ENCODE measurements at regions of chr1 and their contacts with region 1.

Region 1: GRCh38 chr1:153510984-153511410 is 24.8 kb downstream of the S100A6 start:
- DNase-seq: peak; percentile 87
- H3K4me3 Mint-ChIP-seq: no peak overlapping the region
- H3K27ac Mint-ChIP-seq: peak overlapping the region; percentile 73
- H3K4me1 Mint-ChIP-seq: peaks cover 60% of the 10 kb centered on the region
- H3K27me3 Mint-ChIP-seq: no peaks in the 10 kb centered on the region
- CTCF ChIP-seq: peak; percentile 100

Region 2: DNA sequence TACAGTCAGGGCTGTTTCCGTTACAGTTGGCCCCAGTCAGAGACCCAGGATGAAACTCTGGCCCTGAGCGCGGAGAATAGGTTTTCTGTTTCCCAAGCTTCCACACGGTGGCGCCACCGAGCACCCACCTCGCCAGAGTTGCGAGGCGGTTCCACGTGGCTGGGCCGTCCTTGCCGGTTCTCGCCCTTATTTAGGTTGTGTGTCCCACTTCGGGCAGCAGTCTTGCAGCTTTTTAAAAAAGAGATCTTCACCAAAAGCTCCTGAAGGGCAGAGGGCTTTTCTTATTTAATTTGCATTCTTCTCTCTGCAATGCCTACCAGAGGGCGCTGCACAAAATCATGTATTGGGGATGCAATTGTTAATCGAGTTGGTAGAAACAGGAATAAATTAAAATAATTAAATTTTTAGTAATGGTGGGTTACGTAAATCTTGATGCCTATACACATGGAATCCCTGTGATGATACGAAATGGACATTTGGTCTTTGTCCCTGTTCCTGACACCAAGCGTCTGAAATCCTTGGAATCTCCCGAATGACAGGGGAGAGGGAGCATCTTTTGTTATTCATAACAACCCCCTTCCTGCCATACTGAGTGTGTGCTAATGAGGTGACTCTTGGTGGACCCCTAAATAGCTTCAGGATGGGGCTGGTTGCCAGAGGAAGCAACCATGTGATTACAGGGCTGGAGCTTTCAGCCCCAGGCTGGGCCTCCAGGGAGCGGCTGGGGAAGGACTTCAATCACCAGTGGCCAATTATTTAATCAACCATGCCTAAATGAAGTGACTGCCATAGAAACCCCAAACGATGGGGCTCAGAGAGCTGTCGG is 45.0 kb before region 1 on chr1:
- CTCF ChIA-PET with region 1: no interaction called
- POLR2A ChIA-PET with region 1: no interaction called
- intact Hi-C with region 1: no loop called
- DNase-seq: peak; percentile 72
- H3K4me3 Mint-ChIP-seq: no peak overlapping the region
- H3K27ac Mint-ChIP-seq: no peak overlapping the region
- H3K4me1 Mint-ChIP-seq: no peaks in the 10 kb centered on the region
- H3K27me3 Mint-ChIP-seq: peaks cover 32% of the 10 kb centered on the region
- CTCF ChIP-seq: peak; percentile 93

Region 3: GRCh38 chr1:153526132-153526543 is 15.1 kb after region 1 on chr1:
- CTCF ChIA-PET with region 1: interaction called, 154 read pairs
- POLR2A ChIA-PET with region 1: interaction called, 780 read pairs
- intact Hi-C with region 1: no loop called
- DNase-seq: peak; percentile 94
- H3K4me3 Mint-ChIP-seq: peak overlapping the region; percentile 29
- H3K27ac Mint-ChIP-seq: peak overlapping the region; percentile 85
- H3K4me1 Mint-ChIP-seq: peaks cover 38% of the 10 kb centered on the region
- H3K27me3 Mint-ChIP-seq: no peaks in the 10 kb centered on the region
- CTCF ChIP-seq: no peak

Region 4: DNA sequence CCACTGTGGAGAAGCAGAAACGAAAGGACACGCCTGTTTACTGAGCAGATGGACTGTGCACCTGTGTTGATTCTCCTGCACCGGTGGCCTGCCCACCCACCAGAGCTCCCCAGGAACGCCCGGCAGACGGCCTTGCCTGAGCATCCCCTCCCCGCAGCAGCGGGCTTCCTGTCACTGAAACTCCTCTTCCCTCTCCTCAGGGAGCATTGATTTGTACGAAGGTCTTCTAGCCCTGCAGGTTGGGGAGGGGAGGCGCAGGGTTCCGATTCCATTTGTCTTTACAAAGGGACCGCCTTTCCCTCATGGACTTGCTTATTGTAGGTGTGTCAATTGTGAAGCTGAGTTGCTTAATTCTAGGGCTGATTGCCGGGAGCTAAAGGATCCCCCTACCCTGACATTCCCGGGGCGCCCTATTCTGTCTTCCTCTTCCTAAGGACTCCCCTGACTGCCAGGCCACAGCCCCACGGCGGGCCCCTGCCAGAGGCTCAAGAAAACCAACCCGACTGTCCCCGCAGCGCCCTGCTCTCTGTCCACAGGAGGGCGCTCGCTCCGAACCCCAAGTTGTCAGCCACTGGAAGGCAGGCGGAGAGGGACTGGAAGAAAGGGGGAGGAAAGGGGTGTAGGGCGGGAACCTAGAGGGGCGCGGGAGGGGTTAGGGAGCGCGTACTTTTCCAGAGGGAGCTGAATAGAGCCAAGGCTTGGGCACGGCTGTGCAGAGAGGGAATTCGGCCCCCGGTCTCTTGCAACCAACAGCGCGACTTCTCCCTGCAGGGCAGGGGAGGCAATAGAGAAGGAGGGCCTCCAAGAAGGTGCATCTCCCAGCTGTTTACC is 22.0 kb after region 1 on chr1:
- CTCF ChIA-PET with region 1: interaction called, 154 read pairs
- POLR2A ChIA-PET with region 1: interaction called, 780 read pairs
- intact Hi-C with region 1: loop called (anchors 1 kb)
- DNase-seq: peak; percentile 97
- H3K4me3 Mint-ChIP-seq: peak overlapping the region; percentile 99
- H3K27ac Mint-ChIP-seq: peak overlapping the region; percentile 75
- H3K4me1 Mint-ChIP-seq: peaks cover 47% of the 10 kb centered on the region
- H3K27me3 Mint-ChIP-seq: no peaks in the 10 kb centered on the region
- CTCF ChIP-seq: peak; percentile 93

Region 5: GRCh38 chr1:153545067-153546055 is 34.4 kb after region 1 on chr1 and contains the start of gene S100A4:
- CTCF ChIA-PET with region 1: interaction called, 26 read pairs
- POLR2A ChIA-PET with region 1: interaction called, 780 read pairs
- intact Hi-C with region 1: no loop called
- DNase-seq: peak; percentile 99
- H3K4me3 Mint-ChIP-seq: peak within 1 kb of the TSS; percentile 72
- H3K27ac Mint-ChIP-seq: peak within 1 kb of the TSS; percentile 92
- H3K4me1 Mint-ChIP-seq: peaks cover 89% of the 10 kb centered on the region
- H3K27me3 Mint-ChIP-seq: no peaks in the 10 kb centered on the region
- CTCF ChIP-seq: no peak
- total RNA-seq, gene S100A4: 27.2 and 60.7 TPM in 2 replicates

Region 6: GRCh38 chr1:153553830-153554541 is 43.0 kb after region 1 on chr1:
- CTCF ChIA-PET with region 1: interaction called, 26 read pairs
- POLR2A ChIA-PET with region 1: interaction called, 19 read pairs
- intact Hi-C with region 1: no loop called
- DNase-seq: no peak
- H3K4me3 Mint-ChIP-seq: no peak overlapping the region
- H3K27ac Mint-ChIP-seq: peak overlapping the region; percentile 17
- H3K4me1 Mint-ChIP-seq: peaks cover 27% of the 10 kb centered on the region
- H3K27me3 Mint-ChIP-seq: no peaks in the 10 kb centered on the region
- CTCF ChIP-seq: no peak

Region 7: GRCh38 chr1:153617675-153618074 is 106.7 kb after region 1 on chr1:
- CTCF ChIA-PET with region 1: interaction called, 103 read pairs
- POLR2A ChIA-PET with region 1: interaction called, 15 read pairs
- intact Hi-C with region 1: loop called (anchors 1 kb)
- DNase-seq: peak; percentile 86
- H3K4me3 Mint-ChIP-seq: peak overlapping the region; percentile 90
- H3K27ac Mint-ChIP-seq: peak overlapping the region; percentile 76
- H3K4me1 Mint-ChIP-seq: peaks cover 47% of the 10 kb centered on the region
- H3K27me3 Mint-ChIP-seq: no peaks in the 10 kb centered on the region
- CTCF ChIP-seq: peak; percentile 90

Region 8: GRCh38 chr1:153749408-153750005 is 238.5 kb after region 1 on chr1:
- CTCF ChIA-PET with region 1: interaction called, 5 read pairs
- POLR2A ChIA-PET with region 1: interaction called, 3 read pairs
- intact Hi-C with region 1: loop called (anchors 1 kb)
- DNase-seq: peak; percentile 89
- H3K4me3 Mint-ChIP-seq: no peak overlapping the region
- H3K27ac Mint-ChIP-seq: no peak overlapping the region
- H3K4me1 Mint-ChIP-seq: peaks cover 5% of the 10 kb centered on the region
- H3K27me3 Mint-ChIP-seq: no peaks in the 10 kb centered on the region
- CTCF ChIP-seq: peak; percentile 98

Measured in MCF 10A (cell line).